GM23248 (cell line): ENCODE measurements at regions of chr17 and their contacts with region 1.

Region 1: DNA sequence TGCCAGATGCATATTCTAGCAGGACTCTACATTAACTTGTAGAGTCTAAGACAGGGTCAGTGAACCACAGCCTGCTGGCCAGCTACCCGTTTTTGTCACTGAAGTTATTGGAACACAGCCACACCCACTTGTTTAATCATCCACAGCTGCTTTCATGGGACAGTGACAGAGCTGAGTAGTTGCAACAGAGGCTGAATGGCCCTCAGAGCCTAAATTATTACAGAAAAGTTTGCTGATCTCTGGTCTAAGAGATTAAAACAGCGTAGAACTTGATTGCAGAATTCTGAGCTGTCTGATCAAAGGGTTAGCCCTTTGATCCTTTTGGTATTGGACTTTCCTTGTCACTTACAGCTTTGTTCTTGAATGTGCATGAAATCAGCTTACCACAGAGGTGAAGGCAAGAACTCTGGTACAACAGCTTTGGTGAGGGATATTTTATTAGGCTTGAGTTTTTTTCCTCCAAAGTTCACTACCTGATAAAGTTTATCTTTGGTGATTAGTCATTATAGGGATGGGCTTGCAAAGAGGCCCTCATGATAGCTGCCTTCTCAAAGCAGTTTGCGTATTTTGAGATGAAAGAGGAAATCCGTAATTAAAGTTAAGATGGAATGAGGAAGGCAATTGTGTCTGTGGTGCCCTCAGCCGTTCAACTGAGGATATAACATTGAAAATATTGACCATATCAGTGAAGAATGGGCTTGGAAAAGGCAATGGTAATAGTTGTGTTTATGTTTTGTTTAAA is 23.6 kb downstream of the ALDH3A2 start:
- DNase-seq: peak; percentile 66
- H3K4me3 ChIP-seq: no peak overlapping the region
- H3K27ac ChIP-seq: no peak overlapping the region
- H3K4me1 ChIP-seq: peaks cover 13% of the 10 kb centered on the region
- H3K27me3 ChIP-seq: no peaks in the 10 kb centered on the region

Region 2: DNA sequence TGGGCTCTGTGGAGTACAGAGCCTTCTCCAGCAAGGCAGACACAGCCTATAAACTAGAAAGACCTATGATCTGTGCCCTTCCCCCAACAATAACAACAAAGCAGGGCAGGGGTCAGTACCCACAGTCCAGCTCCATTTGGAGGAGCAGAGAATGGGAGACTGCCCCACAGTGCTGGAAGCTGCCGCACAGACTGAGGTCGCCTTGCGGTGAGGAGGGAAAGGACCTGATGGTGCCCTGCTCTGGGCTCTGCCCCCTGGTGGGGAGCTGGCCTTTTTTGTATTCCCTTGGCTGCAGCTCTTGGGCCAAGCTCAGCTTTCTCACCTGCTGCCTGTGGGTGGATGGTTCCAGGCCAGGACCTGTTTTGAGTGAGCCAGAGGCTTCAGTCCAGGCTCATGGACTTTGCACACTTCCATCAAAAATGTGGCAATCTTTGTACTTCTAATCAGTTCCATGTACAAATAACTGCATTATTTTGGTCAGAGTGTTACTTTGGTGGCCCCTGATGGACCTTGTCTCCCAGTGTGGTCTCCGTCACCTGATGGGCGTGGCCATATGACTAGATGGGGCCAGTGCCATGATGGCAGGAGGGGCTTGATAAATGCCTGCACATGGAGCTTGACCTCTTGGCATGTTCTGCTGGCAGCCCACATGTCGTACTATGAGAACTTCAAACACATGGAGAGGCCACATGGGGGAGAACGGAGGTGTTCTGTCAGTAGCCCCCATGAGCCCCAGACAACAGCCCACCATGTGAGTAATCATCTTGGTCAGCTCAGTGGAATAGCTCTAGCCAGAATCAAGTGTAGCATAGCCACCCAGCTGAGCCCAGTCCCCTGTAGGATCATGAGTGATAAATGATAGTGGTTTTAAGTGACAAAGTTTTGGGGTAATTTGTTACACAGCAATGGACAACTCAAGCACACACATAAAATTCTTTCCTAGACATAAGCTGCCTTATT is 333.9 kb before region 1 on chr17:
- in situ Hi-C with region 1: no loop called
- DNase-seq: peak; percentile 48
- H3K4me3 ChIP-seq: no peak overlapping the region
- H3K27ac ChIP-seq: no peak overlapping the region
- H3K4me1 ChIP-seq: 0 out of 2 replicates have a peak, but pooled peaks cover 7% of the 10 kb centered on the region
- H3K27me3 ChIP-seq: no peaks in the 10 kb centered on the region

Region 3: GRCh38 chr17:19362277-19363113 is 309.7 kb before region 1 on chr17 and contains the start of gene B9D1:
- in situ Hi-C with region 1: loop called (anchors 25 kb)
- DNase-seq: peak; percentile 97
- H3K4me3 ChIP-seq: peak within 1 kb of the TSS; percentile 76
- H3K27ac ChIP-seq: peak within 1 kb of the TSS; percentile 71
- H3K4me1 ChIP-seq: peaks cover 7% of the 10 kb centered on the region; the same call in 1 of the 2 replicates
- H3K27me3 ChIP-seq: no peaks in the 10 kb centered on the region
- total RNA-seq, gene B9D1: 14.9 and 15.5 TPM in 2 replicates

Region 4: GRCh38 chr17:19460700-19461099 is 211.5 kb before region 1 on chr17:
- in situ Hi-C with region 1: no loop called
- DNase-seq: peak; percentile 24
- H3K4me3 ChIP-seq: no peak overlapping the region
- H3K27ac ChIP-seq: no peak overlapping the region
- H3K4me1 ChIP-seq: no peaks in the 10 kb centered on the region
- H3K27me3 ChIP-seq: peaks cover 13% of the 10 kb centered on the region; the same call in 1 of the 2 replicates

Region 5: GRCh38 chr17:19867064-19867313 is 194.8 kb after region 1 on chr17:
- in situ Hi-C with region 1: no loop called
- DNase-seq: peak; percentile 78
- H3K4me3 ChIP-seq: peak overlapping the region; percentile 84
- H3K27ac ChIP-seq: no peak overlapping the region
- H3K4me1 ChIP-seq: no peaks in the 10 kb centered on the region
- H3K27me3 ChIP-seq: no peaks in the 10 kb centered on the region

Region 6: GRCh38 chr17:19958023-19958422 is 285.8 kb after region 1 on chr17:
- in situ Hi-C with region 1: no loop called
- DNase-seq: peak; percentile 80
- H3K4me3 ChIP-seq: no peak overlapping the region
- H3K27ac ChIP-seq: peak overlapping the region; percentile 67
- H3K4me1 ChIP-seq: peaks cover 12% of the 10 kb centered on the region
- H3K27me3 ChIP-seq: no peaks in the 10 kb centered on the region